ENCODE measurements at regions of chr3 and their contacts with region 1.

Region 1: GRCh38 chr3:44988073-44988472 is 12.0 kb downstream of the EXOSC7 start:
- DNase-seq: no peak
- H3K4me3 ChIP-seq: no peak overlapping the region
- H3K27ac ChIP-seq: no peak overlapping the region
- H3K4me1 ChIP-seq: peaks cover 36 to 53% of the 10 kb centered on the region in 2 donors
- H3K27me3 ChIP-seq: no peaks in the 10 kb centered on the region
- CTCF ChIP-seq: peak in 5 of 6 experiments; percentile 28 to 53 (median 35)
- POLR2A ChIP-seq: no peak

Region 2: GRCh38 chr3:44939581-44940111 is 48.4 kb before region 1 on chr3:
- intact Hi-C with region 1: loop called (anchors 10 kb)
- DNase-seq: peak; percentile 89 to 91
- H3K4me3 ChIP-seq: no peak overlapping the region
- H3K27ac ChIP-seq: peak overlapping the region; percentile 35 to 73 (median 44)
- H3K4me1 ChIP-seq: peaks cover 28 to 36% of the 10 kb centered on the region in 2 donors
- H3K27me3 ChIP-seq: no peaks in the 10 kb centered on the region
- CTCF ChIP-seq: peak in 1 of 6 experiments; percentile 7
- POLR2A ChIP-seq: no peak

Measured in thyroid gland (tissue), 4 donors.